ENCODE measurements at regions of chr11 and their contacts with region 1.

Region 1: DNA sequence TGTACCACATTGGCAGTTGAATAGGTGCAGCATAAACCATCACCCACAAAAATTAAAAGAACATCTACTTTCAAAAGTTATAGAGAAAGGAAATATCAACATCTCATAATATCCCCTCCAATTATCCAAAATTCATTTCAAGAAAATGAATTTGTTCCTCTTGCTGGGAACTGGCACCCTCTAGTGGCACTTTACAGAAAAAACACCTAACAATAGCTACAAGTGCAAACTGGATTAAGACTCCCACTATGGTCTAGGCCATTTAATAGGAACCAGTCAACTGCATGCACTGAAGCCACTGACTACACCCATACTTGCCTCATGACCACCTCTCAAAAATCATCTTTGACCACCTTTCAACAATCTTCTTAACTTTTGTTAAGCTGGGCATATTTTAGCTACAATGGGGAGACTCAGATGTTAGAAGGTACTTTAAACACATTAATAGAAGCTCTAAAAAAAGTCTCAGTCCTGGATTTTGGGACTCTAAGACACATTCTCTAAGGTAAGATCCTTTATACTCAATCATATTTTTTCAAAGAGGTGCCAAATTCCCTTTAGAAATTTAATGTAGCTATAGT is 17.3 kb downstream of the TRAF6 start:
- DNase-seq: peak in 4 of 9 experiments; percentile 22 to 76 (median 48)
- ATAC-seq: peak; percentile 69
- H3K4me3 ChIP-seq: no peak overlapping the region
- H3K4me3 Mint-ChIP-seq: no peak overlapping the region
- H3K27ac ChIP-seq: no peak overlapping the region
- H3K27ac Mint-ChIP-seq: no peak overlapping the region
- H3K4me1 ChIP-seq: peaks cover 8% of the 10 kb centered on the region
- H3K4me1 Mint-ChIP-seq: peaks cover 20% of the 10 kb centered on the region
- H3K27me3 ChIP-seq: no peaks in the 10 kb centered on the region
- H3K27me3 Mint-ChIP-seq: no peaks in the 10 kb centered on the region
- CTCF ChIP-seq: peak; percentile 92

Region 2: GRCh38 chr11:35815556-35816315 is 677.1 kb before region 1 on chr11:
- CTCF ChIA-PET with region 1: no interaction called
- POLR2A ChIA-PET with region 1: no interaction called
- intact Hi-C with region 1: loop called in 1 of 2 experiments (anchors 10 kb)
- DNase-seq: no peak
- ATAC-seq: no peak
- H3K4me3 ChIP-seq: no peak overlapping the region
- H3K4me3 Mint-ChIP-seq: no peak overlapping the region
- H3K27ac ChIP-seq: no peak overlapping the region
- H3K27ac Mint-ChIP-seq: no peak overlapping the region
- H3K4me1 ChIP-seq: no peaks in the 10 kb centered on the region
- H3K4me1 Mint-ChIP-seq: no peaks in the 10 kb centered on the region
- H3K27me3 ChIP-seq: no peaks in the 10 kb centered on the region
- H3K27me3 Mint-ChIP-seq: no peaks in the 10 kb centered on the region
- CTCF ChIP-seq: no peak

Region 3: DNA sequence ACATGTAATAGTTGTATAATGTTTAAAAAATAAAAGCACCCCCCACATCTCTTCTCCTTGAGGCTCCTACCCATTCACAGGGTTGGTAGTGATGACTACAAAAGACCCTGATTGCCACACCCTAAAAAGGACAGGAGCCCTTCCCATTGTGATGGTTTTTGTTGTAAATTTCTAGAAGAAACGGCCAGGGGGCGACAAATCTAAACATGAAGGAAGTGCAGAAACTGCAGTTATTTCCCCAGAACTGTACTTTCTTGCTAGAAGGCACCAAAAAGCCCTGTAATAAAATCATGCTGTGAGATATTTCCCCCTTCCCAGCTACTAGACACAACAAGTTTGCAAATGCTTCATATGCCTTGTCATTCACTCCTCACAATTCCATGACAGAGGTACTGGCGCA is 185.9 kb before region 1 on chr11:
- CTCF ChIA-PET with region 1: no interaction called
- POLR2A ChIA-PET with region 1: no interaction called
- intact Hi-C with region 1: loop called in 1 of 2 experiments (anchors 5 kb)
- DNase-seq: peak in 3 of 9 experiments; percentile 20 to 55 (median 48)
- ATAC-seq: no peak
- H3K4me3 ChIP-seq: no peak overlapping the region
- H3K4me3 Mint-ChIP-seq: no peak overlapping the region
- H3K27ac ChIP-seq: no peak overlapping the region
- H3K27ac Mint-ChIP-seq: no peak overlapping the region
- H3K4me1 ChIP-seq: no peaks in the 10 kb centered on the region
- H3K4me1 Mint-ChIP-seq: no peaks in the 10 kb centered on the region
- H3K27me3 ChIP-seq: no peaks in the 10 kb centered on the region
- H3K27me3 Mint-ChIP-seq: peaks cover 12% of the 10 kb centered on the region
- CTCF ChIP-seq: no peak

Region 4: DNA sequence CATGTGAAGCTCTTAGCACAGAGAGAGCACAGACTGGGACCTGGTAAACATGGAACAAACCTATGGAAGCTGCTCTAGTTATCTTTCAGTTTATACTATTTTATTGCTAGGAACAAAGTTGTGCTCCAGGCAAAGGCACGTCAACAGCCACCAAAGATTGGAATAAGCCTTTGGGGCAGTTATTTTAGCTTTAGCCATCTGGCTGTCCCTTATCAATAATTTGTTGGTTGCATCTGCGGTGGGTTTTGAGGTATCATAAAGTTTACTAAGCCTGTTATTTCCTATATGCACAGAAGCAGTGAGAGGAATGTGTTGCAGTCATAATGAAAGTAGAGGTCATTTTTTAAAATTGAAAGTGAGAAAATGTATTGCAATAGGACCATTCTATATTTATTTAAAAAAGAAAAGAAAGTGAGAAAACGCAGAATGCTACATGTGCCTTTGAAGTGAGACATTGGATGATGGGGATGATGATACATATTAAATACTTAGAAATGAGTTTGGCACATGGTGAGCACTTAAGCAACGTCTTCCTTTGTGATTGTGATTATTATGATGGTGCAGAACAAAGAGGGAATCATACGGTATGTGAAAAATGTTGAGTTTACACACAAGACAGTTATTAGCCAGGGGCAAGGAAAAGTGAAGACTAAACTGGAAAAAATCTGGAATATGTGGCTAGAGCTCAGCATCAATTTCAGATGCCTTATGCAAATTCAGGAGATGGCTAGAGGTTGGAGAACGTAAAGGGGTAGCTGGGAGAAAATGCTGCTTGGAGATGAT is 138.4 kb before region 1 on chr11:
- CTCF ChIA-PET with region 1: interaction called, 4 read pairs
- POLR2A ChIA-PET with region 1: no interaction called
- intact Hi-C with region 1: loop called (anchors 5 kb)
- DNase-seq: peak in 1 of 9 experiments; percentile 18
- ATAC-seq: no peak
- H3K4me3 ChIP-seq: no peak overlapping the region
- H3K4me3 Mint-ChIP-seq: no peak overlapping the region
- H3K27ac ChIP-seq: no peak overlapping the region
- H3K27ac Mint-ChIP-seq: no peak overlapping the region
- H3K4me1 ChIP-seq: peaks cover 11% of the 10 kb centered on the region
- H3K4me1 Mint-ChIP-seq: peaks cover 28% of the 10 kb centered on the region
- H3K27me3 ChIP-seq: peaks cover 0 to 3% of the 10 kb centered on the region in 2 experiments
- H3K27me3 Mint-ChIP-seq: peaks cover 14% of the 10 kb centered on the region
- CTCF ChIP-seq: no peak

Region 5: DNA sequence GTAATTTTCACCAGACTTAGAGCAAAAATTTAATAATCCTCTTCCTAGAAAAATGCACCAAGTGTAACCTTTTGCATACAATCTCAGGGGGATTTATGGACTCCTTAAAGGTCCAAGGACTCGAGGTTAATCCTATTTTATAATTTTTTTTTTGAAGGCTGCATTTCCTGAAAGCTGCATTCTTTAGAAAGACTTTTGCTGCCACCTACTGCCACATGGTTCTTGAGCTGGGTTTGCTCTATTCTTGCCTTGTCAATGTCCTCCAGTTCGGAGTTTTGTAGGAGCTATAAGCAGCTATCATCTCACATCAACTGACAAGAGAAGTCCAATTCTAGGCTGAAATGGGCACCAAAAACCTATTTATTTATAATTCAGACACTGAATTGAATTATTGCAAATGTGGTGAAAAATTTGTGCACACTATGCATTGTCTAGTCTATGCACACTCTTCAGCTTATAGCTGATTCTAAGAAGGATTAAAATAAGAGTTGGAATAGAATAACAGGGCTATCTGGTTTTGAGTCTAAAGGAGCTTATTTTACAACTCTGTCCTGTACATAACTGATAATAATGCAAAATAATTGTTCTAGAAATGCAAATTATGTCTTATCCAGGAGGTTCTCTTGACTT is 14.0 kb before region 1 on chr11:
- CTCF ChIA-PET with region 1: interaction called, 12 read pairs
- POLR2A ChIA-PET with region 1: no interaction called
- intact Hi-C with region 1: no loop called
- DNase-seq: peak in 3 of 9 experiments; percentile 24 to 66 (median 60)
- ATAC-seq: no peak
- H3K4me3 ChIP-seq: no peak overlapping the region
- H3K4me3 Mint-ChIP-seq: no peak overlapping the region
- H3K27ac ChIP-seq: no peak overlapping the region
- H3K27ac Mint-ChIP-seq: no peak overlapping the region
- H3K4me1 ChIP-seq: no peaks in the 10 kb centered on the region
- H3K4me1 Mint-ChIP-seq: peaks cover 6% of the 10 kb centered on the region
- H3K27me3 ChIP-seq: no peaks in the 10 kb centered on the region
- H3K27me3 Mint-ChIP-seq: no peaks in the 10 kb centered on the region
- CTCF ChIP-seq: peak; percentile 39

Region 6: DNA sequence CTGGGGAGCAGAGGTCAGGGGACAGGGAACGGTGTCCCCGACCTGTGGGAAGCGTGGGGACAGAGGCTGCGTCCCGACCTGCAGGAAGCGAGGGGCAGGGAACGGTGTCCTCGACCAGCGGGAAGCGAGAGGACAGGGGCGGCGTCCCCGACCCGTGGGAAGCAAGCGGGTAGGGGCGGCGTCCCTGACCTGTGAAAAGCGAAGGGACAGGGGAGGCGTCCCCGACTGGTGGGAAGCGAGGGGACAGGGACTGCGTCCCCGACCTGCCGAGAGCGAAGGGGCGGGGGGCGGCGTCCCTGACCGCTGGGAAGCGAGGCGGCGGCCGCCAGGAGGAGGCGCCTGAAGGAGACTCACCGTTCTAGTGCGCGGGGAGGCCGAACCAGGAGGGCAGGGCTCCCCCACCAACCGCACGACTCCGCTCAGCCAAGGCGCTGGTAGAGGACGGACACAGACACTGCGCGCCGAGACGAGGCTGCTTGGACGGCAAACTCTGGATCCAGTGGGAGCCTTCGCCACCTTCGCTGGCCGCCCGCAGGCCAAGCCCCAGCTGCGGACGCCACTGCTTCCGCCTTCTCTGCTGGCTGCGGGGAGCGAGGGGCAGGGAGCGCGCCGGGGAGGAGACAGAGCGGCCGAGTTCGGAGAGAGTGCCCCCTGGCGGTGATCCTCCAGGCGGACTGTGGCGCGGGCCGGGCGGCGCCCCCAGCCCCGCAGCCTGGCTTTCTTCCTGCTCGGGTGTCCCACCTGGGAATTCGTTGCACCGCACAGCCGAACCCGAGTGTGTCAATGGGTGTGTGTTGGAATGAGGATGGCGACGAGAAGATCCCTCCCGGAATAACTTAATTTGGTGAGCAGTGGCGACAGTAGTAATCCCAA is 17.1 kb after region 1 on chr11 and contains the start of gene TRAF6:
- CTCF ChIA-PET with region 1: interaction called, 26 read pairs
- POLR2A ChIA-PET with region 1: interaction called, 6 read pairs
- intact Hi-C with region 1: no loop called
- DNase-seq: peak; percentile 74 to 95 (median 91)
- ATAC-seq: peak; percentile 95
- H3K4me3 ChIP-seq: peak within 1 kb of the TSS; percentile 84 to 97
- H3K4me3 Mint-ChIP-seq: peak within 1 kb of the TSS; percentile 92
- H3K27ac ChIP-seq: peak within 1 kb of the TSS; percentile 74 to 83
- H3K27ac Mint-ChIP-seq: peak within 1 kb of the TSS; percentile 92
- H3K4me1 ChIP-seq: peaks cover 16% of the 10 kb centered on the region
- H3K4me1 Mint-ChIP-seq: peaks cover 37% of the 10 kb centered on the region
- H3K27me3 ChIP-seq: no peaks in the 10 kb centered on the region
- H3K27me3 Mint-ChIP-seq: peaks cover 5% of the 10 kb centered on the region
- CTCF ChIP-seq: peak; percentile 84
- total RNA-seq, gene TRAF6: 29.7 to 31.3 TPM